ENCODE measurements at regions of chr16 and their contacts with region 1.

Region 1: GRCh38 chr16:1677802-1678496 is at the start of gene JPT2:
- DNase-seq: peak; percentile 95
- ATAC-seq: peak; percentile 95
- H3K4me3 ChIP-seq: peak within 1 kb of the TSS; percentile 93 to 97
- H3K27ac ChIP-seq: peak within 1 kb of the TSS; percentile 74
- H3K4me1 ChIP-seq: peaks cover 8 to 38% of the 10 kb centered on the region in 2 experiments
- H3K27me3 ChIP-seq: no peaks in the 10 kb centered on the region
- CTCF ChIP-seq: no peak
- POLR2A ChIP-seq: no peak
- RAD21 ChIP-seq: no peak
- total RNA-seq, gene JPT2: 113 TPM

Region 2: DNA sequence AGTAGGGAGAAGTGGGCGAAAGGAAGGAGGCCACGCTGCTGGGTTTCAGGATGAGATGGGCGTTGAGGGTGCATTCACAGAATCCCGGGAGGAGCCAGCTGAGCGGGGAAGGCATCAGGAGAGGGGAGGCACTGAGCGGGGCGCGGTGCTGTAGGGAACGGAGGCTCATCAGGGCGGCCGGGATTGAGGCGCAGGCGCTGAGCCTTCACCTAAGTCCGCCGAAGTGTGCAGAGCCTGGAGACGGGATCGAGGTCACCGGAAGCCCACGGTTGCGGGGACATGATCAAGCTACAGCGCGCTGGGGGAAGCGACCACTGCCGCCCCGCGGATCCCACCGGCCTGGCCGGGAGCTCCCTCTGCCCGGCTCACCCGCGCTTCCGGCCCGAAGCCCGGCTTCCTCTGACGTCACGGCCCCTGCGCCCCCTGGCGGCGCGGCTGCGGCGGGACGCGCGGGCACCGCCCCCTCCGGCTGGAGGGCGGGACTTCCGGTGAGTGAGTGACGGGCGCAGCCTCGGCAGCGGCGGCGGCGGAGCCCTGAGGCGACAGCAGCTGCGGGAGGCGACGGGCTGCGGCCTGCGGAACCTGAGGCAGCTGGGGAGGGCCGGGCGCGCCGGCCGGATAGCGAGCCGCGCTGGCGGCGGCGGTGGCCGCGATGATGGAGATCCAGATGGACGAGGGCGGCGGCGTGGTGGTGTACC is 27.9 kb after region 1 on chr16 and contains the start of gene MAPK8IP3:
- CTCF ChIA-PET with region 1: interaction called, 12 read pairs
- POLR2A ChIA-PET with region 1: interaction called, 7 read pairs
- RAD21 ChIA-PET with region 1: no interaction called
- intact Hi-C with region 1: loop called (anchors 1 kb)
- DNase-seq: peak; percentile 77
- ATAC-seq: peak; percentile 84
- H3K4me3 ChIP-seq: peak within 1 kb of the TSS; percentile 81 to 96
- H3K27ac ChIP-seq: peak within 1 kb of the TSS; percentile 82
- H3K4me1 ChIP-seq: peaks cover 11 to 20% of the 10 kb centered on the region in 2 experiments
- H3K27me3 ChIP-seq: no peaks in the 10 kb centered on the region
- CTCF ChIP-seq: peak; percentile 35 to 86 (median 73); a peak in 5 of 6 replicates
- POLR2A ChIP-seq: peak; percentile 88
- RAD21 ChIP-seq: peak; percentile 26; the same call in 1 of the 2 replicates
- total RNA-seq, gene MAPK8IP3: 75.3 TPM

Region 3: DNA sequence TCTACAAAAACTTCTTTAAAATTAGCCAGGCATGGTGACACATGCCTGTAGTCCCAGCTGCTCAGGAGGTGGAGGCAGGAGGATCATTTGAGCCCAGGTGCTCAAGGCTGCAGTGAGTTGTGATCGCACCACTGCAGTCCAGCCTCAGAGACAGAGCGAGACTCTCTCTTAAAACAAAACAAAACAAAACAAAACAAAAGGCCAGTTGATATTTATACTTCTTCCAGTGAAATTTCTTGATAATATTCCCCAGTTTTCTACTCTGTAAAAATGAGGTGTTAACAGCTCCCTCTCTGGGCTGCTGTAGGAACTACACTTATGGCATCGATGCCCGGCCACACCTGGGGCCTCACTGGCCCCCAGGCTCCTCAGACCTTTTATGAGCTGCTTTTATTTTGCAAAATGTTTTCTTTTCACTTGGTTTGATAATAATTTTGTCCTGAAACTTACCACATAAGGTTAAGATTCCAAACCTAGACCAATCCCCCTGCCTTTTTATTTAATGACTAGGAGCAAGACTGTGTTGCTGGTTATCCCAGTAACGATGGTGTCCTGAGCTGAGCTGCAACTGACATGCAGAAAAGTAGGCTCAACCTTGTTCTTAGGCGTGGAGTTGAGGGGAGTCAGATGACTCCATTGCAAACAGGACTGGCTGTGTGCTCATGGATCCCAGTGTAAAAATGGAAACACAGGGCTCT is 45.6 kb after region 1 on chr16:
- CTCF ChIA-PET with region 1: no interaction called
- POLR2A ChIA-PET with region 1: interaction called, 3 read pairs
- RAD21 ChIA-PET with region 1: interaction called in 1 of 2 experiments, 3 read pairs
- intact Hi-C with region 1: loop called (anchors 1 kb)
- DNase-seq: no peak
- ATAC-seq: peak; percentile 43
- H3K4me3 ChIP-seq: no peak overlapping the region
- H3K27ac ChIP-seq: peak overlapping the region; percentile 70
- H3K4me1 ChIP-seq: peaks cover 47 to 56% of the 10 kb centered on the region in 2 experiments
- H3K27me3 ChIP-seq: no peaks in the 10 kb centered on the region
- CTCF ChIP-seq: peak; percentile 49 to 82 (median 78); a peak in 5 of 6 replicates
- POLR2A ChIP-seq: no peak
- RAD21 ChIP-seq: peak; percentile 70

Region 4: DNA sequence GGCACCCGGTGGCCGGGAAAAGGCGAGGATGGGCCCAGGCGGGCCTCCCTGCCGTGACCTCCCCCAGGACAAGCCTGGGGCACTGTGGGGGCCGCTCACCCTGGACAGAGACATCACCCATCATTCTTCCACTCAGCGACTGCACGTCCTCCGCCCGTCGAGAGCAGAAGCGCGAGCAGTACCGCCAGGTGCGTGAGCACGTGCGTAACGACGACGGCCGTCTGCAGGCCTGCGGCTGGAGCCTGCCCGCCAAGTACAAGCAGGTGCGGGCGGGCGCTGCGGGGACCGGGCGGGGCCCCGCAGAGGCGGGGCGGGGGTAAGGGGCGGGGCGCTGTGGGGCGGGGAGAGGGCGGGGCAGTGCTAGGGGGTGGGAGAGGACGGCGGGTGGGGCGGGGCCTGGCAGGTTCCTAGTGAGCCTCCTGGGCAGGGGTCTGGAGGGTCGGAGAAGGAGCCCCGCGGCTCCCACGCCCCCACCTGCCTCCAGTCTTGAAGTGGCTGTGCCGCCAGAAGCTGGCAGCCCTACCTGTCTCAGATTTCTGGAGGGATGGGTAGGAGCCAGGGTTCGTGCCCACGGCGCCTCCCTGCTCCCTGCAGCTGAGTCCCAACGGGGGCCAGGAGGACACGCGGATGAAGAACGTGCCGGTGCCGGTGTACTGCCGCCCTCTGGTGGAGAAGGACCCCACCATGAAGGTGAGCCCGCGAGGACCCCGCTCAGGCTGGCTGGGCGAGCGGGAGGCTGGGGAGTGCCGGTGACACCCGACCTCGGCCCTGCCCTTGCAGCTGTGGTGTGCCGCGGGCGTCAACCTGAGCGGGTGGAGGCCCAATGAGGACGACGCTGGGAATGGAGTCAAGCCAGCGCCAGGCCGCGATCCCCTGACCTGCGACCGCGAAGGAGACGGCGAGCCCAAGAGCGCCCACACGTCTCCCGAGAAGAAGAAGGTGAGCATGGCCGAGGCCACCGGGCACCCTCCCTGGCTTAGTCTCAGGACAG is 85.9 kb after region 1 on chr16:
- CTCF ChIA-PET with region 1: no interaction called
- POLR2A ChIA-PET with region 1: no interaction called
- RAD21 ChIA-PET with region 1: interaction called in 1 of 2 experiments, 13 read pairs
- intact Hi-C with region 1: no loop called
- DNase-seq: no peak
- ATAC-seq: peak; percentile 72
- H3K4me3 ChIP-seq: no peak overlapping the region
- H3K27ac ChIP-seq: peak overlapping the region; percentile 43; the same call in 1 of the 2 replicates
- H3K4me1 ChIP-seq: peaks cover 8 to 15% of the 10 kb centered on the region in 2 experiments; a peak in 3 of 4 replicates
- H3K27me3 ChIP-seq: no peaks in the 10 kb centered on the region
- CTCF ChIP-seq: peak in 2 of 3 experiments; percentile 49 to 57; a peak in 4 of 6 replicates
- POLR2A ChIP-seq: no peak
- RAD21 ChIP-seq: peak; percentile 69

Region 5: DNA sequence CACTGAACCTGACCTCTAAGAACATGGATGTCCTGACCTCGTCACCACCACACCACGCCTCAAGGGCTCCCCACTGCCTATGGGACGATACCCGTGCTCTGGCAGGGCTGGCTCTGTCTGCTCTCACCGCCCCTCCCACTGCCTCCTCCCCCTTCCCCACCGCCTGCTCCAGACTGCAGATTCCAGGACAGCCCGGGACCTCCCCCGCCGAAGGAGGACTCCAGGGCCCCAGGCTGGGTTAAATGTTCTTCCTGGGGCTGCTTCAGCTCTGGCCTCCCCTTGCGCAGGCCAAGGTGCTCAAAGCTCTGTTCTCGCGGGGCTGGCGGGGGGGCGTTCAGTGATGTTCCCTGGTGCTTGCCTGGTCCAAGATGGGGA is 344.8 kb after region 1 on chr16:
- CTCF ChIA-PET with region 1: no interaction called
- POLR2A ChIA-PET with region 1: no interaction called
- RAD21 ChIA-PET with region 1: no interaction called
- intact Hi-C with region 1: no loop called
- DNase-seq: no peak
- ATAC-seq: peak; percentile 53
- H3K4me3 ChIP-seq: peak overlapping the region; percentile 25 to 50
- H3K27ac ChIP-seq: peak overlapping the region; percentile 88
- H3K4me1 ChIP-seq: peaks cover 38 to 61% of the 10 kb centered on the region in 2 experiments
- H3K27me3 ChIP-seq: no peaks in the 10 kb centered on the region
- CTCF ChIP-seq: no peak
- POLR2A ChIP-seq: no peak
- RAD21 ChIP-seq: no peak